Endothelial cell of umbilical vein (primary cell): ENCODE measurements at regions of chr3 and their contacts with region 1.

Region 1: DNA sequence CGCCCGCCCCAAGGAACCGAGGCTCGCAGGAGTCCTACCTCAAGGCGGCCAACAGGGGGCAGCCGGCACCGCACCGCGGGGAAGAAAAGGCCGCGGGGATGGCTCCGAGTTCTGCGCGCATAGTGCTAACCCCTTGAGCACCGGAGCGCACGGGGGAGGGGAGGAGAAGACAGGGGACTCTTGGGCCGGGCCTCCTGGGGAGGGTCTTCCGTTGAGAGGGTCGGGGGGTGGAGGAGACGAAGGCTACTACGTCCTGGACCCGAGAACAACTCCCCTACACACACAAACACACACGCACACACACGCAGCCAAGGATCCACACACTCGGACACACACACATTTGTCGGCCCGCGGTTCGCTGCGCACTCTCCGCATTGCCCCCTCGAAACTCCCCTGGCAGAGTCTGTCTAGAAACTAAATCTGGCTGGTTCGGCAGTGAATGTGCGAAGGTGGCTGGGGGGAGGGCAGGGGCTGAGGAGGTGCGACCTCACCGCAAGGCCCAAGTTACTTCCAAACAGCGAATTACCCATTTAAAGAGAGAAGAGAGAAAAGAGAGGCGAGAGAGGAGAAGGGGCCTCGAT is 1.8 kb downstream of the WNT5A start:
- DNase-seq: peak; percentile 53
- H3K4me3 ChIP-seq: no peak overlapping the region
- H3K27ac ChIP-seq: no peak overlapping the region
- H3K4me1 ChIP-seq: peaks cover 14% of the 10 kb centered on the region
- H3K27me3 ChIP-seq: peaks cover 77 to 88% of the 10 kb centered on the region in 2 experiments
- CTCF ChIP-seq: peak; percentile 27 to 83
- POLR2A ChIP-seq: no peak

Region 2: DNA sequence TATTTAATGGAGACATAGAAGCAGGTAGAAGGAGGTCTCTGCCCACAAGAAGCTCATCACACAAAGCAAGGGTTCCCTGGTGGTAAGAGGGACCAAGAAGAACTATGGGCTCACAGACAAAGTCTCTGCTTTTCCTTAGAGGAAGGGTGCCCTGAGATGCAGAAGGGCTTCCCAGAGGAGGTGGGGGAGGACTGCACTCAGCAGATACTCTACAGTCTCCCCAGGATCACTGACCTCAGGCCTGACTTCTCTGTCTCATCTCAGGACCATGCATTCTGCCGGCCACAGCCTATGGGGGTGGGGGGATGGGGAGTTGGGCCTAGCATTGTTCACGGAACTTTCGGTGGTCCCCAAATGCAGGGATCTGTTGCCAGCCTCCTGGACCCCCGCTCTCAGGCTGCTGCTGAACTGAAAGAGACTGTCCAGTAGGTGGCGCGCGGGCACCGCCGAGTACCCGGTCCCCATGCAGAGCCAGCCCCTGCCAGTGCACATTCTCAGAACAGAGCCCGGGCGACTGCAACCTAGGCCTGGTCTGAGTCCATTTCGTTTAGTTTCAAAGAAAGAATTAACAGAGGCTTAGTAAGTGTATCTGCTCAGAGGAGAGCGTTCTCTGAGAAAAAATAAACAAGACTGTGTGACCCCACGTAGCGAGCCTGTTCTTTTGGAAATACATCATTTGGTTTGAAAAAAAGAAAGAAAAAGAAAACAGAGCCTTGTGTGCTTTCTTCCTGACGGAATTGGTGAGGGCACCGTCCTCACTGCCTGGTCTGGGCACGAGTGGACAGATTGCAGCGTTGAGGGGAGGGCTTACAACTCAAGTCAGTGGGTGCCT is 631.5 kb before region 1 on chr3:
- CTCF ChIA-PET with region 1: no interaction called
- POLR2A ChIA-PET with region 1: no interaction called
- dilution Hi-C with region 1: no loop called
- intact Hi-C with region 1: loop called (anchors 2 kb)
- DNase-seq: peak; percentile 38
- H3K4me3 ChIP-seq: no peak overlapping the region
- H3K27ac ChIP-seq: no peak overlapping the region
- H3K4me1 ChIP-seq: no peaks in the 10 kb centered on the region
- H3K27me3 ChIP-seq: no peaks in the 10 kb centered on the region
- CTCF ChIP-seq: peak; percentile 71 to 87
- POLR2A ChIP-seq: no peak

Region 3: GRCh38 chr3:55620351-55621025 is 135.2 kb after region 1 on chr3:
- CTCF ChIA-PET with region 1: no interaction called
- POLR2A ChIA-PET with region 1: no interaction called
- dilution Hi-C with region 1: no loop called
- intact Hi-C with region 1: loop called (anchors 5 kb)
- DNase-seq: no peak
- H3K4me3 ChIP-seq: no peak overlapping the region
- H3K27ac ChIP-seq: peak overlapping the region; percentile 49
- H3K4me1 ChIP-seq: peaks cover 15% of the 10 kb centered on the region
- H3K27me3 ChIP-seq: no peaks in the 10 kb centered on the region
- CTCF ChIP-seq: no peak
- POLR2A ChIP-seq: no peak

Region 4: GRCh38 chr3:55746808-55747413 is 261.6 kb after region 1 on chr3:
- CTCF ChIA-PET with region 1: interaction called, 13 read pairs
- POLR2A ChIA-PET with region 1: no interaction called
- dilution Hi-C with region 1: no loop called
- intact Hi-C with region 1: loop called (anchors 1 kb)
- DNase-seq: peak; percentile 6
- H3K4me3 ChIP-seq: no peak overlapping the region
- H3K27ac ChIP-seq: no peak overlapping the region
- H3K4me1 ChIP-seq: no peaks in the 10 kb centered on the region
- H3K27me3 ChIP-seq: no peaks in the 10 kb centered on the region
- CTCF ChIP-seq: peak in 1 of 2 donors; percentile 4
- POLR2A ChIP-seq: no peak

Region 5: GRCh38 chr3:56042326-56042951 is 557.1 kb after region 1 on chr3:
- CTCF ChIA-PET with region 1: interaction called, 11 read pairs
- POLR2A ChIA-PET with region 1: no interaction called
- dilution Hi-C with region 1: no loop called
- intact Hi-C with region 1: loop called (anchors 1 kb)
- DNase-seq: peak; percentile 44
- H3K4me3 ChIP-seq: no peak overlapping the region
- H3K27ac ChIP-seq: no peak overlapping the region
- H3K4me1 ChIP-seq: no peaks in the 10 kb centered on the region
- H3K27me3 ChIP-seq: no peaks in the 10 kb centered on the region
- CTCF ChIP-seq: peak in 1 of 2 donors; percentile 36
- POLR2A ChIP-seq: no peak

Region 6: GRCh38 chr3:56303487-56303886 is 818.2 kb after region 1 on chr3:
- CTCF ChIA-PET with region 1: interaction called, 57 read pairs
- POLR2A ChIA-PET with region 1: no interaction called
- dilution Hi-C with region 1: no loop called
- intact Hi-C with region 1: loop called (anchors 1 kb)
- DNase-seq: peak; percentile 91
- H3K4me3 ChIP-seq: no peak overlapping the region
- H3K27ac ChIP-seq: no peak overlapping the region
- H3K4me1 ChIP-seq: peaks cover 9% of the 10 kb centered on the region
- H3K27me3 ChIP-seq: no peaks in the 10 kb centered on the region
- CTCF ChIP-seq: peak; percentile 70 to 81
- POLR2A ChIP-seq: no peak